Activated CD8-positive, alpha-beta memory T cell treated with anti-CD3 and anti-CD28 coated beads, Interleukin-2, amount 10 ng/mL, durations not matched to agents 7 days and 5 days (primary cell): ENCODE measurements at regions of chr22 and their contacts with region 1.

Region 1: GRCh38 chr22:36065775-36066559 is 37.3 kb upstream of the RBFOX2 start:
- DNase-seq: peak; percentile 81
- ATAC-seq: peak; percentile 87
- H3K4me3 Mint-ChIP-seq: peak overlapping the region; percentile 77
- H3K27ac Mint-ChIP-seq: peak overlapping the region; percentile 80
- H3K4me1 Mint-ChIP-seq: peaks cover 8% of the 10 kb centered on the region
- H3K27me3 Mint-ChIP-seq: peaks cover 18% of the 10 kb centered on the region

Region 2: DNA sequence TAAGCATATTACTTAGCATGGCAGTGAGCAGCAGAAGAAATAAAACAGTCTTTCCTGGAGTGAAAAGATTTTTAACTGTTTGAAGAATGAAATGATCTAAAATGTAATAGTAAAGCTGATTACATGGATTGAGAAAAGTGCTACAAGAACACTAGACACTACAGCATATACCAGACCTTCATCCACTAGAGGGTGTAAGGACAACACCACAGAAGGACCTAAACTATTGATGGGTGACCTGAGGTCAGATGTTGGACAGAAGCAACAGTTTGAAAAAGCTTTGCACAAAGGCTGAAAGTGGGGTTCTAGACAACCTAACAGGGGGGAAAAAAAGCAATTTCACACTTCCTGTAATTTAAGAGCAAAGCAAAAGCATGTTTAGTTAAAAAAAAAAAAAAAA is 135.0 kb before region 1 on chr22:
- CTCF ChIA-PET with region 1: interaction called, 22 read pairs
- DNase-seq: no peak
- ATAC-seq: no peak
- H3K4me3 Mint-ChIP-seq: no peak overlapping the region
- H3K27ac Mint-ChIP-seq: no peak overlapping the region
- H3K4me1 Mint-ChIP-seq: no peaks in the 10 kb centered on the region
- H3K27me3 Mint-ChIP-seq: peaks cover 19% of the 10 kb centered on the region

Region 3: GRCh38 chr22:36036167-36036624 is 29.8 kb before region 1 on chr22:
- CTCF ChIA-PET with region 1: interaction called, 11 read pairs
- DNase-seq: no peak
- ATAC-seq: no peak
- H3K4me3 Mint-ChIP-seq: no peak overlapping the region
- H3K27ac Mint-ChIP-seq: no peak overlapping the region
- H3K4me1 Mint-ChIP-seq: no peaks in the 10 kb centered on the region
- H3K27me3 Mint-ChIP-seq: peaks cover 64% of the 10 kb centered on the region

Region 4: DNA sequence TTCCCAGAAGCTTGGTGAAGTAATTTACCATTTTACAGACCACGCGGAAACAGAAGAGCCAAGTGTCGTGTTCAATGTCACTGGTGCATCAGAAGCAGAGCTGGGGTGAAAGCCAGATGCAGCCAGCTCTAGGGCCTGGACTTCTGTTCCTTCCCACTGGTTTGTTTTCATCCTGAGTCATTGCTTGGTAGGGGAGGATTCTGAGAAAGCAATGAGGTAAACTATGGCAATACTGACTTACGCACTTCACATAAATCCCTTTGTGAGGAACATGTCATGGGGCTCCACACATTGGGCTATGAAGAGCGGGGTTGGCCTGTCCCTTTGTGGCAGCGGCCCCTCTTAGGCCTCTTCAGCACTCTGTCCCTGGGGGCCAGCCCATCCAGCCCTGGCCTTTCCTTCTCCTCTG is 15.1 kb after region 1 on chr22:
- CTCF ChIA-PET with region 1: interaction called, 70 read pairs
- DNase-seq: no peak
- ATAC-seq: no peak
- H3K4me3 Mint-ChIP-seq: no peak overlapping the region
- H3K27ac Mint-ChIP-seq: no peak overlapping the region
- H3K4me1 Mint-ChIP-seq: peaks cover 18% of the 10 kb centered on the region
- H3K27me3 Mint-ChIP-seq: peaks cover 10% of the 10 kb centered on the region

Region 5: DNA sequence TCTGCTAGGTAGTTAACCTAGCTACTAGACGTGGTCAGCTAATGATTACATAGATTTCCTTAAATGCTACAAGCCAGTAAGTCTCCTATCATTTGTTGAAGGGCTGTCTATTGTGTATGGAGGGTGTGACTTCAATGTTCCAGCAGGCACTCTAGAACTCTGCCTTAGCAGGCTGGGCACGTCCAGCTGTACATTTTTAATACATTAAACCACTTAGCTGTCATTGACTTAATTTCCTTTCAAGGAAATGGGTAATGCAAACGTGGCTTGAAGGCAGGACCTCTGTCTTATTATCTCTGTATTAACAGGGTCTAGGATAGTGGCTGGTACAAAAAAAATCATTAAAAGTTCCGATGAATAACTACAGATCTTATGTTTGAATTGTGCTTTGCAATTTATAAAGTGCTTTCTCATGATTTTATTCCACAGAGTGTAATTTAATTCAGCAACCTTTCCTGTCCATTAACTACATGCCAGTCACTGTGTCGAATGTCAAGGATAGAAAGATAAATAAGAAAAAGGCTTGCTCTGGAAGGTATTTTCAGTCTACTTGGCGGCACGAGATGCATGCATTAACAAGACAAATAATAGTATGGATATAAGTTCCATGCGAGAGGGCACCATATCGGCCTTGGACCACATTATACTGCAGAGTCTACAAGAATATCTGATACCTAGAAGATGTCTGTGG is 34.3 kb after region 1 on chr22:
- CTCF ChIA-PET with region 1: interaction called, 10 read pairs
- DNase-seq: no peak
- ATAC-seq: no peak
- H3K4me3 Mint-ChIP-seq: no peak overlapping the region
- H3K27ac Mint-ChIP-seq: no peak overlapping the region
- H3K4me1 Mint-ChIP-seq: no peaks in the 10 kb centered on the region
- H3K27me3 Mint-ChIP-seq: peaks cover 38% of the 10 kb centered on the region

Region 6: GRCh38 chr22:36129486-36130388 is 63.8 kb after region 1 on chr22:
- CTCF ChIA-PET with region 1: interaction called, 33 read pairs
- DNase-seq: no peak
- ATAC-seq: no peak
- H3K4me3 Mint-ChIP-seq: no peak overlapping the region
- H3K27ac Mint-ChIP-seq: no peak overlapping the region
- H3K4me1 Mint-ChIP-seq: peaks cover 13% of the 10 kb centered on the region
- H3K27me3 Mint-ChIP-seq: peaks cover 5% of the 10 kb centered on the region

Region 7: GRCh38 chr22:36644333-36644757 is 578.4 kb after region 1 on chr22:
- CTCF ChIA-PET with region 1: no interaction called
- DNase-seq: peak; percentile 48
- ATAC-seq: peak; percentile 33
- H3K4me3 Mint-ChIP-seq: no peak overlapping the region
- H3K27ac Mint-ChIP-seq: no peak overlapping the region
- H3K4me1 Mint-ChIP-seq: no peaks in the 10 kb centered on the region
- H3K27me3 Mint-ChIP-seq: peaks cover 39% of the 10 kb centered on the region